Ovary (tissue), 10 donors: ENCODE measurements at regions of chr4 and their contacts with region 1.

Region 1: DNA sequence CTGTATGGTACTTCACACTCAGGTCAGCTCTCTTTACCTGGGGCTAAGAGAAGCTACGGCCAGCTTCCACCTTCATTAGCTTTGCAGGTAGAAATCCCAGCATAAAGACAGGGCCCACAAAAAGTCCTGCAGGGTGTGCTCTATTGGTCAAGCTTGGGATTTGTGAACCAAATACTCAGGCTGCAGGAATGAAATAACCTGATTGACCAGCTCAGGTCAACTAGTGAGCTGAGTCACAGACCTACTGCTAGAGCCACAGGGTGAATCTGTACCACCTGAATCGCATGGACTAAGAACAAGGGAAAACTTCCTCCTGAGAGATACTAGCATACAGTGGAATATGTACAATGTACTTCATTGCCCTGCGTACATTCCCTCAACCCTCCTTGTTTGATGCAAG is 172.2 kb downstream of the HHIP start:
- DNase-seq: no peak
- H3K4me3 ChIP-seq: no peak overlapping the region
- H3K27ac ChIP-seq: no peak overlapping the region
- H3K4me1 ChIP-seq: no peaks in the 10 kb centered on the region
- H3K27me3 ChIP-seq: no peaks in the 10 kb centered on the region
- CTCF ChIP-seq: no peak
- EP300 ChIP-seq: no peak
- POLR2A ChIP-seq: no peak

Region 2: DNA sequence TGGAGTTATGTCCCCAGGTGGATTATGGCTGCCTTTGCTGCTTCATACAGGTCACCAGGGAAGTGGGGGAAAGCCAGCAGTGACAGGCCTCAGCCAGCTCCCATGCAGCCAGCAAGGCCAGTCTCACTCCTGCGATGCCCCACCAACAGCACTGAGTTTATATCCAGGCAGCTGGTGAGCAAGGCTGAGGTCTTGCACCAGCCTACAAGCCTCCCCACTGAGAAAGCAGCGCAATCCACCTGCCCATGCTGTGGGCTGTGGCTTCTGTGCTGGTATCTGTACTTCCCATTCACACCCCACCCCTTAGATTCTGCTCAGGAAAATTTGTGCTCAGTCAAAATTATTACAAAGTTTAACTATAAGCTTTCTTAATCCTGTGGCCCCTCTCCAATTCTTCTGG is 18.7 kb before region 1 on chr4:
- intact Hi-C with region 1: loop called in 1 of 4 experiments (anchors 2 kb)
- DNase-seq: no peak
- H3K4me3 ChIP-seq: no peak overlapping the region
- H3K27ac ChIP-seq: no peak overlapping the region
- H3K4me1 ChIP-seq: no peaks in the 10 kb centered on the region
- H3K27me3 ChIP-seq: no peaks in the 10 kb centered on the region
- CTCF ChIP-seq: no peak
- EP300 ChIP-seq: no peak
- POLR2A ChIP-seq: no peak

Region 3: GRCh38 chr4:144851948-144852347 is 33.8 kb after region 1 on chr4:
- intact Hi-C with region 1: loop called in 1 of 4 experiments (anchors 1 kb)
- DNase-seq: no peak
- H3K4me3 ChIP-seq: no peak overlapping the region
- H3K27ac ChIP-seq: no peak overlapping the region
- H3K4me1 ChIP-seq: no peaks in the 10 kb centered on the region
- H3K27me3 ChIP-seq: no peaks in the 10 kb centered on the region
- CTCF ChIP-seq: no peak
- EP300 ChIP-seq: no peak
- POLR2A ChIP-seq: no peak

Region 4: GRCh38 chr4:144872508-144873225 is 54.5 kb after region 1 on chr4:
- intact Hi-C with region 1: no loop called
- DNase-seq: no peak
- H3K4me3 ChIP-seq: no peak overlapping the region
- H3K27ac ChIP-seq: no peak overlapping the region
- H3K4me1 ChIP-seq: peaks cover 7% of the 10 kb centered on the region
- H3K27me3 ChIP-seq: no peaks in the 10 kb centered on the region
- CTCF ChIP-seq: no peak
- EP300 ChIP-seq: no peak
- POLR2A ChIP-seq: no peak